Activated CD4-positive, alpha-beta memory T cell treated with anti-CD3 and anti-CD28 coated beads, Interleukin-2, amount 10 ng/mL, durations not matched to agents 7 days and 5 days (primary cell): ENCODE measurements at regions of chr17 and their contacts with region 1.

Region 1: GRCh38 chr17:50200457-50201275 is 765 bp downstream of the COL1A1 start:
- DNase-seq: peak; percentile 87
- H3K4me3 Mint-ChIP-seq: peak overlapping the region; percentile 67
- H3K27ac Mint-ChIP-seq: no peak overlapping the region
- H3K4me1 Mint-ChIP-seq: peaks cover 20% of the 10 kb centered on the region
- H3K27me3 Mint-ChIP-seq: peaks cover 60% of the 10 kb centered on the region

Region 2: DNA sequence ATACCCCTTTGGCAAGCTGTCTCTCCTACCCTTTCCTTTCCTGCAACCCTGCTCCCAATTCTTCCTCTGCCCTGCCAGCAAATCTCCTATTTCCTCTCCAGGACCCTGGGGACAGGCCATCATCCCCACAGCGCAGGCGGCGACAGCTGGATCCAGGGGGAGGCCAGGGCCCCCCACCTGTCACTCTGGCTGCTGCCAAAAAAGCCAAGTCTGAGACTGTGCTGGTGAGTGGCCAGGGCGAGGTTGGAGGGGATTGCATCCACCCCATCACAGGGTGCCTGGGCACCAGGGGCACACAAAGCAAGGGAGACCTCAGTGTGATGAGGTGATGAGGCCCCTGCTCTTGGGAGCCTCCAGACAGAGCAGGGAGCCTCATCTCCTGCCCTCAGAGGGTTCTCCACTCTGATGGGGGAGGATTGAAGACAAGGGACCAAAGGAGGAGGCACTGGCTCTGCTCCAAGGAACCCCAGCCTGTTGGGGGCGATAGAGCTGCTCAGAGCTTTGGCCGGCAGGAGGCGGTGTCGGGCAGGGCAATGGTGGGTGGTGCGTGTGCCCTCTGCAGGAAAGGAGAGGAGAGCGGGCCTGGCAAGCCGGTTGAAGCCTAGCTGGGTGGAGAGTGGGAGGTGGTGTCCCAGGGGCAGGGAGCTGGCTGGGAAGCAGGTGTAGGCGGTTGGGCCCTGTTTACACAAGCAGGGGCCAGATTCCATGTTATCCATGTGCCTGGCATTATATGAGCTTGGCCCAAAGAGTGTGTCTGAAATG is 121.2 kb before region 1 on chr17:
- CTCF ChIA-PET with region 1: no interaction called
- POLR2A ChIA-PET with region 1: no interaction called
- DNase-seq: peak; percentile 38
- H3K4me3 Mint-ChIP-seq: no peak overlapping the region
- H3K27ac Mint-ChIP-seq: no peak overlapping the region
- H3K4me1 Mint-ChIP-seq: no peaks in the 10 kb centered on the region
- H3K27me3 Mint-ChIP-seq: no peaks in the 10 kb centered on the region

Region 3: DNA sequence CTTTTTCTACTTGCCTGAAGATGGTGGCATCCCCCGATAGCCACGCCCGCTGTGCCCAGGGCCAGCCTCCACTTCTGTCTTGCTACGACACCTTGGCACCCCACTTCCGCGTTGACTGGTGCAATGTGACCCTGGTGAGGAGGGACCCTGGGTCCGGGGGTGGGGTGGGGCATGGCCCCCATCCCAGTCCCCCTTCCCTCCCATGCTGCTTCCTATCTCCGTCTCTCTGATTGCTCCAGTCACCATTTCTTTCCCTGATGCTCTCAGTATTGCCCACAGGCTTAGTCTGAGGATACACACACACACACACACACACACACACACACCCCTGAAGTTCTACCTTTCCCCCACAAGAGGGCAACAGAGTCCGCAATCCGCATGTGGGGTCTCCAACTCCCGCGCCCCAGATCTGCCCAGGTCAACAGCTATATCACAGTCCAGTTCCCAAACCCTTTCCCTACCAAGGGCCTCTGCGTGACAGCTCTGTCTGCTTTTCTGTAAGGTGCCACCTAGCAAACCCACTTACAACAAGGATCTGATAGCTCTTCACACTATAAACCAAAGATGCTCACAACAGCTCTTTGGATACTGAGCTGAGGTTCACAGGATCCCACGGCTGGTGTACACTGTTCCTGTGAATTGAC is 31.4 kb before region 1 on chr17:
- CTCF ChIA-PET with region 1: interaction called, 37 read pairs
- POLR2A ChIA-PET with region 1: interaction called, 6 read pairs
- DNase-seq: peak; percentile 65
- H3K4me3 Mint-ChIP-seq: peak overlapping the region; percentile 12
- H3K27ac Mint-ChIP-seq: no peak overlapping the region
- H3K4me1 Mint-ChIP-seq: peaks cover 24% of the 10 kb centered on the region
- H3K27me3 Mint-ChIP-seq: peaks cover 4% of the 10 kb centered on the region

Region 4: DNA sequence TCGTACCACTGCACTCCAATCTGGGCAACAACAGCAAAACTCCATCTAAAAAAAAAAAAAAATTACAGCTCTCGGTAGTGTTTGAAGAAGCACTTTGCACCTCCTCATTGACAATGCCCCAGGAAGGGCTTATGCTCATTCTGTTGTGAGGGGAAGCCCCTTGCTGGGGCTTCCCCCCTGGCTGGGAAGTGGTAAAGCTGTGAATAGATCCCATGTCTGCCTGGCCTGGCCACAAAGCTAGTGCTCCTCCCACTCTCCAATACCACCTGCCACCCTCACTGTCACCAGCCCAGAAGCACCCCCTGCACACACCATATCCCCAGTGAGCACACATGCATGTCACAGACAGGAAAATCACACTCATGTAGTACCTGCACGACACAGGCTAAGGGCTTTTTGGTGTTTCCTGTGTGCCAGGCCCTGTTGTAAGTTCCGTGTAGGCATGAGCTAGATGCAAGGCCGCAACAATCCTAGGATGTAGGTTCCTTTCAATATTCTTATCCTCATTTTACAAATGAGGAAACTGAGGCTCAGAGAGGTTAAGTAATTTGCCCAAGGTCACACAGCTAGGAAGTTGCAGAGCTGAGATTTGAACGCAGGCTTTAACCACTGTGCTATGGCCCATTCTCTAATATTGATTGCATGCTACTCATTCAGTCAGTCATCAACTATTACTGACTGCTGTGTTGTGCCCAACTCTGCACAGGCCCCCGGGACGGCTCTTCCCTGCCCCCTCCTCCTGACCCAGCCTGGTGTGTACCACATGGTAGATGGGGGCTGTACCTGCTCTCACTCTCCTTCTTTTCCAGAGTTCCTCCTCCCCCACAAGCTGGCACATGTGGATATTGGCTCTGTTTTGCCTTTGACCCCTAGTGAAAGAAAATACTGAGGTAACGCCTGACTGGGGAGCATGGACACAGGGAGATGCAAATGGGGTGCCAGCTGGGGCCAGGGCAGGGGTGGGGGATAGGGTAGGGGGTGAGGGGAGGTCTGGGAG is 12.7 kb after region 1 on chr17:
- CTCF ChIA-PET with region 1: interaction called, 17 read pairs
- POLR2A ChIA-PET with region 1: no interaction called
- DNase-seq: peak; percentile 68
- H3K4me3 Mint-ChIP-seq: no peak overlapping the region
- H3K27ac Mint-ChIP-seq: no peak overlapping the region
- H3K4me1 Mint-ChIP-seq: peaks cover 11% of the 10 kb centered on the region
- H3K27me3 Mint-ChIP-seq: peaks cover 41% of the 10 kb centered on the region

Region 5: DNA sequence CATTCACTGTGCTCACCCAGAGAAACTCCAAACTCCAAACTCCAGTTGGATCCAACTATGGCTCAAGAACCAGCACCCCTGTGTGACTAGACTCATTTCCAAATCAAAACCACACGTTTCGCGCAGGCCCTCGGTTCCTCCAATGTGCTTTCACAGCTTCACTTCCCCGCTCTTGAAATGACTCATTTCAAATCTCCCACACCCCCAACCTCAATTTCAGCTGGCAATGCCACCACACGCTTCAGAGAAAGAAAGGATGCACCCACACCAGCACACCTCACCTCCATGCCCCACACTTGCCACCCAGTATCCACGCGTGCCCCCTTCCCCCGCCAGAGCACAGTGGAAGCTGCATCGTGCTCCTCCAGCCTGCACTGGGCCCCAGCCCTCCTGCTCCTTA is 82.6 kb after region 1 on chr17:
- CTCF ChIA-PET with region 1: interaction called, 25 read pairs
- POLR2A ChIA-PET with region 1: interaction called, 3 read pairs
- DNase-seq: peak; percentile 70
- H3K4me3 Mint-ChIP-seq: no peak overlapping the region
- H3K27ac Mint-ChIP-seq: peak overlapping the region; percentile 2
- H3K4me1 Mint-ChIP-seq: peaks cover 38% of the 10 kb centered on the region
- H3K27me3 Mint-ChIP-seq: peaks cover 24% of the 10 kb centered on the region